Activated CD4-positive, alpha-beta T cell treated with anti-CD3 and anti-CD28 coated beads for 36 hours (primary cell): ENCODE measurements at regions of chr7 and their contacts with region 1.

Region 1: GRCh38 chr7:37440738-37441385 is 7.8 kb downstream of the ELMO1 start:
- DNase-seq: peak; percentile 67
- ATAC-seq: peak; percentile 76
- H3K4me3 Mint-ChIP-seq: peak overlapping the region; percentile 61
- H3K27ac Mint-ChIP-seq: peak overlapping the region; percentile 86
- H3K4me1 Mint-ChIP-seq: peaks cover 89% of the 10 kb centered on the region
- H3K27me3 Mint-ChIP-seq: no peaks in the 10 kb centered on the region

Region 2: GRCh38 chr7:37365405-37365804 is 75.5 kb before region 1 on chr7:
- CTCF ChIA-PET with region 1: interaction called, 3 read pairs
- POLR2A ChIA-PET with region 1: interaction called, 4 read pairs
- intact Hi-C with region 1: loop called (anchors 2 kb)
- DNase-seq: peak; percentile 16
- ATAC-seq: peak; percentile 48
- H3K4me3 Mint-ChIP-seq: no peak overlapping the region
- H3K27ac Mint-ChIP-seq: peak overlapping the region; percentile 99
- H3K4me1 Mint-ChIP-seq: peaks cover 85% of the 10 kb centered on the region
- H3K27me3 Mint-ChIP-seq: no peaks in the 10 kb centered on the region

Region 3: GRCh38 chr7:37424995-37425394 is 15.9 kb before region 1 on chr7:
- CTCF ChIA-PET with region 1: interaction called, 4 read pairs
- POLR2A ChIA-PET with region 1: no interaction called
- intact Hi-C with region 1: loop called in 1 of 2 experiments (anchors 2 kb)
- DNase-seq: no peak
- ATAC-seq: peak; percentile 30
- H3K4me3 Mint-ChIP-seq: no peak overlapping the region
- H3K27ac Mint-ChIP-seq: no peak overlapping the region
- H3K4me1 Mint-ChIP-seq: peaks cover 68% of the 10 kb centered on the region
- H3K27me3 Mint-ChIP-seq: no peaks in the 10 kb centered on the region

Region 4: DNA sequence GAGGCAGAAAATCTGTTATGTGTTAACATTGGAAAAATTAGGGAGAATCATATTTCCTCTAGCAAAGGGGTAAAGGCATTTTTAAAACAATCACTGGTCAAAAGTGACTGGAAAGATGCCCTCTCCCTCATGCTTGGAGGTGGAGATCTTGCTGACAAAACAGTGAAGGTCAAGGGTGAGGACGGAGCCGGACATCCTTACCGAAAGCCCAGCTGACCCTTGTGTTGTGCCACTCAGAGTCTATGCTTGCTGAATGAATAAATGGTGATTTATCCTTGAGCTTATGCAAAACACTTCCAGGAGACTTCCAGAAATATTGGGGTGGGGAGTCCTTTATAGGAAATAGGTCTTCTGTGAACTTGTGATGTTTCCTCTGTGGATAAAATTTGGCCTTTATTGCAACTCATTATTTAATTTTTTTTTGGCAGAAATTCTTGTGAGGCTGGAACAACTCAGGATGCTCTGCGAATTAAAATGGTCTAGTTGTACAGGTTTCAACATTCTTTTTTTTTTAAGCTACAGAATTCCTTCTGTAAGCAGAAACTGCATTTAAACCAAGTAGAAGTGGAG is 36.1 kb after region 1 on chr7:
- CTCF ChIA-PET with region 1: no interaction called
- POLR2A ChIA-PET with region 1: no interaction called
- intact Hi-C with region 1: no loop called
- DNase-seq: no peak
- ATAC-seq: no peak
- H3K4me3 Mint-ChIP-seq: no peak overlapping the region
- H3K27ac Mint-ChIP-seq: no peak overlapping the region
- H3K4me1 Mint-ChIP-seq: no peaks in the 10 kb centered on the region
- H3K27me3 Mint-ChIP-seq: peaks cover 10% of the 10 kb centered on the region

Region 5: DNA sequence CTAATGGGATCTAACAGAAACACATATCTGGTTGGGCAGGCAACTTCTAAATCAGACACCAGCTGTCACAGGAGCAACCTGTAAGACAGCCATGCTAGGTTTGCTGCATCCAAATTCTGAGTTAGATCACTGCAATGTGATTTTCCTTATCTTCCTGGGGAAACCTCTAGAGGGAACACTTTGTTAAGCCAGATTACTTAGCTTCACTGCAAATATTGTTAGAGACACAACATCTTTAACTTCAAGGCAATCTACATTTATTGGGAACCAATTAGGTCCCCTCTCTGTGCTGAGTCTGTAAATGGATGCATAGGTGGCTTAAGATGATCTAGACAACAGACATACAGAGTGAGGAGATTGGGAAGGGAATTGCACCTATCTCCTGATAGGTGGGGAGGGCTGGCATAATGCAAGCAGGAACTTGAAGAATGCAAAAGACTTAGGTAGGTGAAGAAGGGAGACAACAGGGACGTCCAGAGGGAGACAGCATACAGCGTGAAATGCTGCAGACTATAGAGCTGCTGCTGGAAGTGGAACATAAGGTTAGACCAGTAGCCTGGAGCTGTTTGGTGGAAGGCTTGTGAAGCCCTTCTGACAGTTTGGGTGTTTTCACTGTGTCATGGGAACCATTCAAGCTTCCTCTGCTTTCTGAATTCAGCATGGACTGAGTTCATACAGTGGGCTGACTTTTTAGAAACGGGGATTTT is 117.6 kb after region 1 on chr7:
- CTCF ChIA-PET with region 1: no interaction called
- POLR2A ChIA-PET with region 1: no interaction called
- intact Hi-C with region 1: no loop called
- DNase-seq: no peak
- ATAC-seq: no peak
- H3K4me3 Mint-ChIP-seq: no peak overlapping the region
- H3K27ac Mint-ChIP-seq: no peak overlapping the region
- H3K4me1 Mint-ChIP-seq: no peaks in the 10 kb centered on the region
- H3K27me3 Mint-ChIP-seq: peaks cover 3% of the 10 kb centered on the region